H1 (cell line): ENCODE measurements at regions of chr14 and their contacts with region 1.

Region 1: DNA sequence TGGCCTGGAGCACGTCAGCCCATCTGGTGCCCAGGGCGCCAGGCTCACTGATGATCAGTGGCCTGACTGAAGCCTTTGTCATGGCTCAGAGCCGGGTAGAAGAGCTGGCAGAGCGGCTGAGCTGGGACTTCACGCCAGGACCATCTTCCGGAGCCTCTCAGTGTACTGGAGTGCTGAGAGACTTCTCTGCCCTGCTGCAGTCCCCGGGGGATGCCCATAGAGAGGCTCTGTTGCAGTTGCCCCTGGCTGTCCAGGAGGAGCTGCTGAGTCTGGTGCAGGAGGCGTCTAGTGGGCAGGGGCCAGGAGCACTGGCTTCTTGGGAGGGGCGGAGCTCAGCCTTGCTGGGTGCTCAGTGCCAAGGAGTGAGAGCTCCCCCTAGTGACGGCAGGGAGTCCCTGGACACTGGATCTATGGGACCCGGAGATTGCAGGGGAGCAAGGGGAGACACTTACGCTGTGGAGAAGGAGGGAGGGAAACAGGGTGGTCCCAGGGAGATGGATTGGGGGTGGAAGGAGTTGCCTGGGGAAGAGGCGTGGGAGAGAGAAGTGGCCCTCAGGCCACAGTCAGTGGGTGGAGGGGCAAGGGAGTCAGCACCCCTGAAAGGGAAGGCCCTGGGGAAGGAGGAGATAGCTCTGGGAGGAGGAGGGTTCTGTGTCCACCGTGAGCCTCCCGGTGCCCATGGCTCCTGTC is 2.0 kb downstream of the KHNYN start:
- DNase-seq: peak; percentile 95 to 96
- H3K4me3 ChIP-seq: peak overlapping the region in 1 of 4 experiments; percentile 76; a peak in 2 of 8 replicates
- H3K27ac ChIP-seq: no peak overlapping the region
- H3K4me1 ChIP-seq: peaks cover 6 to 21% (median 15%) of the 10 kb centered on the region in 4 experiments
- H3K27me3 ChIP-seq: peaks cover 0 to 17% (median 1%) of the 10 kb centered on the region in 4 experiments; a peak in 3 of 7 replicates
- CTCF ChIP-seq: peak; percentile 87 to 100 (median 99)
- EP300 ChIP-seq: no peak
- POLR2A ChIP-seq: no peak
- RAD21 ChIP-seq: peak; percentile 96 to 98

Region 2: GRCh38 chr14:24259252-24259995 is 172.3 kb before region 1 on chr14:
- CTCF ChIA-PET with region 1: no interaction called
- POLR2A ChIA-PET with region 1: no interaction called
- DNase-seq: no peak
- H3K4me3 ChIP-seq: no peak overlapping the region
- H3K27ac ChIP-seq: no peak overlapping the region
- H3K4me1 ChIP-seq: peaks cover 0 to 2% (median 0%) of the 10 kb centered on the region in 4 experiments; a peak in 1 of 7 replicates
- H3K27me3 ChIP-seq: no peaks in the 10 kb centered on the region; a peak in 1 of 7 replicates
- CTCF ChIP-seq: no peak
- EP300 ChIP-seq: no peak
- POLR2A ChIP-seq: no peak
- RAD21 ChIP-seq: no peak

Region 3: GRCh38 chr14:24299255-24300195 is 132.2 kb before region 1 on chr14 and contains the starts of genes DHRS1 and NOP9:
- CTCF ChIA-PET with region 1: interaction called, 21 read pairs
- POLR2A ChIA-PET with region 1: interaction called, 9 read pairs
- DNase-seq: peak; percentile 61 to 99
- H3K4me3 ChIP-seq: peak within 1 kb of the TSS; percentile 76 to 91 (median 88)
- H3K27ac ChIP-seq: no peak within 1 kb of the TSS
- H3K4me1 ChIP-seq: peaks cover 0 to 7% (median 4%) of the 10 kb centered on the region in 4 experiments; a peak in 5 of 7 replicates
- H3K27me3 ChIP-seq: no peaks in the 10 kb centered on the region
- CTCF ChIP-seq: no peak
- EP300 ChIP-seq: peak in 1 of 2 experiments; percentile 10; a peak in 1 of 3 replicates
- POLR2A ChIP-seq: peak; percentile 81 to 88
- RAD21 ChIP-seq: no peak
- total RNA-seq, gene DHRS1: 8.8 and 13.4 TPM in 2 replicates
- total RNA-seq, gene NOP9: 34.8 and 39.3 TPM in 2 replicates

Region 4: DNA sequence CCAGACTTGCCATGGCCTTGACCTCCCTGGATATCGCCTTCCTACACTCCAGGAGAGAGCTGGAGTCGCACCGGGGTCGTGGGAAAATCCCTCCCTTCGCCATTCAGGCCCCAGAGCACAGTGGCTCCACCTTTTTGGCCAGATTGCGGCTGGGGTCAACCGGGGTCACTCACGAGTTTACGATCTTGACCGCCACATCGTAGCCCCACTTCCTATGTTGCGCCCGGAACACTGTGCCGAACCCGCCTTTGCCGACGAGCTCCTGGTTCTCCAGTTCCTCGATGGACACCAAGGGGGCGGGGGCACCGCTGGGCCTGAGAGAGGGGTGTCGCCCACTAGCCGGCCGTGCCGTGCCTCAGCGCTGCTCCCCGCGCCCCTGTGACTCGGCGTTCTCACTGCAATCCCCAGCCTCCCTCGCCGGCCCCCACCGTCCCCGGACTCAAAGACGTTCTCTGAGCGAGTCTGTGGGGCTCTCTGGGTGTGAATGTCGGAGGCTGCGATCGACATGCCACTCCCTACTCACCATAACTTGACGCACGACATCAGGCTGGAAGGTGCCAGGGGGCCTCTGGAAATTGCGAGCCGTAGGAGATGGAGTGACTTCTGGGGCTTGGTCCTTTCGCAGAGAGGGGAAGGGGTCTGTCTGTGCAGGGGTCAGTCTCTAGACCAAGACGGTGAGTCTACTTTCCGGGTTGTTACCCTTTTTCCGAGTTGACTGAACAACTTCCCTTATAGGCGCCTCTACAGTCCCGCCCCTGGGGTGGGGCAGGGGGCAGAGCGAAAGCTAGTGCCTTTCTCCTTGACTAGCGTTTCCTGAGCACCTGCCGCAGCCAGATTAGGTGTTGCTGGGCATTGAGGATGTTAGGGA is 92.2 kb before region 1 on chr14 and contains the start of gene RIPK3:
- CTCF ChIA-PET with region 1: interaction called, 664 read pairs
- POLR2A ChIA-PET with region 1: interaction called, 46 read pairs
- DNase-seq: peak in 1 of 2 experiments; percentile 77
- H3K4me3 ChIP-seq: peak within 1 kb of the TSS; percentile 43 to 72 (median 57)
- H3K27ac ChIP-seq: no peak within 1 kb of the TSS
- H3K4me1 ChIP-seq: peaks cover 0 to 11% (median 3%) of the 10 kb centered on the region in 4 experiments; a peak in 5 of 7 replicates
- H3K27me3 ChIP-seq: peaks cover 53 to 74% (median 72%) of the 10 kb centered on the region in 4 experiments
- CTCF ChIP-seq: no peak
- EP300 ChIP-seq: no peak
- POLR2A ChIP-seq: no peak
- RAD21 ChIP-seq: no peak
- total RNA-seq, gene RIPK3: 0.39 and 0.55 TPM in 2 replicates

Region 5: GRCh38 chr14:24372701-24373416 is 58.9 kb before region 1 on chr14:
- CTCF ChIA-PET with region 1: interaction called, 207 read pairs
- POLR2A ChIA-PET with region 1: interaction called, 13 read pairs
- DNase-seq: no peak
- H3K4me3 ChIP-seq: no peak overlapping the region
- H3K27ac ChIP-seq: no peak overlapping the region
- H3K4me1 ChIP-seq: peaks cover 3 to 27% (median 18%) of the 10 kb centered on the region in 4 experiments
- H3K27me3 ChIP-seq: no peaks in the 10 kb centered on the region
- CTCF ChIP-seq: no peak
- EP300 ChIP-seq: no peak
- POLR2A ChIP-seq: no peak
- RAD21 ChIP-seq: no peak

Region 6: GRCh38 chr14:24398653-24399446 is 32.9 kb before region 1 on chr14 and contains the start of gene NYNRIN:
- CTCF ChIA-PET with region 1: interaction called, 67 read pairs
- POLR2A ChIA-PET with region 1: interaction called, 20 read pairs
- DNase-seq: peak in 1 of 2 experiments; percentile 81
- H3K4me3 ChIP-seq: peak within 1 kb of the TSS; percentile 68 to 80 (median 78)
- H3K27ac ChIP-seq: no peak within 1 kb of the TSS
- H3K4me1 ChIP-seq: peaks cover 0 to 14% (median 10%) of the 10 kb centered on the region in 4 experiments
- H3K27me3 ChIP-seq: peaks cover 0 to 3% (median 0%) of the 10 kb centered on the region in 4 experiments; a peak in 1 of 7 replicates
- CTCF ChIP-seq: no peak
- EP300 ChIP-seq: no peak
- POLR2A ChIP-seq: no peak
- RAD21 ChIP-seq: no peak
- total RNA-seq, gene NYNRIN: 18.3 and 19.6 TPM in 2 replicates

Region 7: DNA sequence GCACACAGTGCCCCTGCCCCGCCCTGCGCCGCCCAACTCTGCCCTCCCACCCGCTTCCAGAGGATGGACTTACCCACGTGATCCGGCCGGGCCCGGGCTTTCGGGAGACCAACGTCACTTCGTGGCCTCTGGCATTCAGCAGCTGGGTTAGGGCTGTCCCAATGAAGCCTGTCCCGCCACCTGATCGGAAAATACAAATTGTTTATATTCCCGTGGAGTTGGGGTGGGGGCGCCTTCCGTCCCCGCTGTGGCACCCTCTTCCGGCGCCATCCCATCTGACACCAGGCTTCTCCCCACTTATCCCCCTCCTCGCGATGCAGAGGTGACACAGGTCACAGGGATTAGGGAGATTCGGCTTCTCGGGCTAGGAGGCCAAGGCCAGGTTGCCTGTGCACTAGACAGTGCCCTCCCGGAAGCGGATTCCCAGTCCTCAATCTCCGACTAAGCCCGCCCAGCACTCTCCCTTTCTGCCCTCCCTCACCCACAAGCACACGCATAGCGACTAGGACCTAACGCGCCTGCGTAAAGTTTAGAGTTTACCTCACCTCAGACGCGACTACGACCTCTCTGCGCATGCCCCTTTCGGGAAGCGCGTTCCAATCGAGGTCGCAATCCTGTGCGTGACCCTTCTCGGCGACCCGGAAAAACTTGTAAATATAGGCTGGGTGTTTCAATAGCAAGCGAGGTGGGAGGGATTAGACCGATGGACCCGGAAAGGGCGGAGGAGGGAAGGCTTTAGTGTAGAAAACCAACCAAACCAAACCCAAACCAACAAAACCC is 10.7 kb after region 1 on chr14 and contains the start of gene SDR39U1:
- CTCF ChIA-PET with region 1: interaction called, 35 read pairs
- POLR2A ChIA-PET with region 1: interaction called, 34 read pairs
- DNase-seq: peak; percentile 91 to 94
- H3K4me3 ChIP-seq: peak within 1 kb of the TSS; percentile 84 to 95 (median 89)
- H3K27ac ChIP-seq: peak within 1 kb of the TSS; percentile 98
- H3K4me1 ChIP-seq: no peaks in the 10 kb centered on the region; a peak in 2 of 7 replicates
- H3K27me3 ChIP-seq: no peaks in the 10 kb centered on the region
- CTCF ChIP-seq: no peak
- EP300 ChIP-seq: no peak; a peak in 1 of 3 replicates
- POLR2A ChIP-seq: peak; percentile 56 to 89
- RAD21 ChIP-seq: no peak
- total RNA-seq, gene SDR39U1: 45.2 and 46.7 TPM in 2 replicates

Region 8: GRCh38 chr14:24595073-24595808 is 163.5 kb after region 1 on chr14:
- CTCF ChIA-PET with region 1: no interaction called
- POLR2A ChIA-PET with region 1: no interaction called
- DNase-seq: no peak
- H3K4me3 ChIP-seq: no peak overlapping the region
- H3K27ac ChIP-seq: no peak overlapping the region
- H3K4me1 ChIP-seq: no peaks in the 10 kb centered on the region
- H3K27me3 ChIP-seq: no peaks in the 10 kb centered on the region
- CTCF ChIP-seq: no peak
- EP300 ChIP-seq: no peak
- POLR2A ChIP-seq: no peak
- RAD21 ChIP-seq: no peak